Heart right ventricle (tissue), 16 donors: ENCODE measurements at regions of chr18 and their contacts with region 1.

Region 1: GRCh38 chr18:37385846-37386778 is 179.5 kb downstream of the CELF4 start:
- DNase-seq: no peak
- ATAC-seq: no peak
- H3K4me3 ChIP-seq: no peak overlapping the region
- H3K27ac ChIP-seq: no peak overlapping the region
- H3K4me1 ChIP-seq: no peaks in the 10 kb centered on the region
- H3K27me3 ChIP-seq: peaks cover 0 to 30% (median 14%) of the 10 kb centered on the region in 7 donors
- CTCF ChIP-seq: peak; percentile 66 to 89 (median 75)

Region 2: GRCh38 chr18:37529863-37530262 is 143.8 kb after region 1 on chr18:
- intact Hi-C with region 1: loop called in 4 of 10 experiments (anchors 5 kb)
- DNase-seq: peak in 1 of 2 donors; percentile 33
- ATAC-seq: peak in 6 of 8 donors; percentile 50 to 88 (median 74)
- H3K4me3 ChIP-seq: no peak overlapping the region
- H3K27ac ChIP-seq: no peak overlapping the region
- H3K4me1 ChIP-seq: peaks cover 0 to 22% (median 11%) of the 10 kb centered on the region in 9 donors
- H3K27me3 ChIP-seq: peaks cover 0 to 85% (median 35%) of the 10 kb centered on the region in 7 donors
- CTCF ChIP-seq: no peak

Region 3: DNA sequence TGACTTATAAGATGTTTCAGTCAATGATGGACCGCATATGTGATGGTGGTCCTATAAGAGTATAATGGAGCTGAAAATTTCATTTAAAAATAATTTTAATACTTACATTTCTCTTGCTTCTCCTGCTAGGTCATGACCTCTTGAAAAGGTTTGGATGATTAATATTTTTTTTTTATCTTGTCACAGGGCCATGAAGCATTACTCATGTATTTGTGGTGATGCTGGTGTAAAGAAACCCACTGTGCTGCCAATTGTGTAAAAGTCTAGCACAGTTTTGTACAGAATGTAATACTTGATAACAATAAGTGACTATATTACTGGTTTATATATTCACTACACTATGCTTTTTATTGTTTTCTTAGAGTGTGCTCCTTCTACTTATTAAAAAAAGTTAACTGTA is 303.7 kb after region 1 on chr18:
- intact Hi-C with region 1: no loop called
- DNase-seq: no peak
- ATAC-seq: no peak
- H3K4me3 ChIP-seq: no peak overlapping the region
- H3K27ac ChIP-seq: no peak overlapping the region
- H3K4me1 ChIP-seq: no peaks in the 10 kb centered on the region
- H3K27me3 ChIP-seq: no peaks in the 10 kb centered on the region
- CTCF ChIP-seq: no peak

Region 4: GRCh38 chr18:37701967-37702366 is 315.9 kb after region 1 on chr18:
- intact Hi-C with region 1: loop called in 1 of 10 experiments (anchors 5 kb)
- DNase-seq: no peak
- ATAC-seq: no peak
- H3K4me3 ChIP-seq: no peak overlapping the region
- H3K27ac ChIP-seq: no peak overlapping the region
- H3K4me1 ChIP-seq: no peaks in the 10 kb centered on the region
- H3K27me3 ChIP-seq: no peaks in the 10 kb centered on the region
- CTCF ChIP-seq: no peak